ENCODE measurements at regions of chr1 and their contacts with region 1.

Region 1: DNA sequence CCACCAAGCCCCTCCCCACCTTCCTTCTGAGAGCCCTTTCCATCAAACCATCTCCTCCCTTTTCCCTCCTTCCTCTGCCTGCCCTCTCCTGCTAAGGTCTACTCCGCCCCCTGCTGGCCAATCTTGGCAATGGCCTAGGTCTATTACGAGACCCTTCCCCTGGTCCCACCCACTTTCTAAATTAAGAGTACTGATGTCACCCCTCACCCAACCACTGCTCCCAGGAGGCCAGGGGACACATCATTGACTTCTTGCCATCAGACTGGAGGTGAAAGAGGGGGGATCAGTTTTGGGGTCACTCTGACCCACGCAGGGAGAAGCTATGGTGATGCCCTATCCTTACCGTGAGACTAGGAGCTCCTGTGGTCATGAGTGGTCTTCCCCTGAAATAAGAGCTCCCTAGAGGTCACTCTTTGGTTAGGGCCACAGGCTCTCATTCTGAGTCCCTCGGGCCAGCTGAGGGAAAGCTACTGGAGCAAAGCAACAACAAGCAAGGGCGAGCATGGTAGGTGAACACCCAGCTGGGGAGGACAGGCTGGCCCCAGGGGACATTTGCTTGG is 34.6 kb upstream of the S100A7 start:
- DNase-seq: peak; percentile 48 to 82
- ATAC-seq: peak; percentile 75

Region 2: DNA sequence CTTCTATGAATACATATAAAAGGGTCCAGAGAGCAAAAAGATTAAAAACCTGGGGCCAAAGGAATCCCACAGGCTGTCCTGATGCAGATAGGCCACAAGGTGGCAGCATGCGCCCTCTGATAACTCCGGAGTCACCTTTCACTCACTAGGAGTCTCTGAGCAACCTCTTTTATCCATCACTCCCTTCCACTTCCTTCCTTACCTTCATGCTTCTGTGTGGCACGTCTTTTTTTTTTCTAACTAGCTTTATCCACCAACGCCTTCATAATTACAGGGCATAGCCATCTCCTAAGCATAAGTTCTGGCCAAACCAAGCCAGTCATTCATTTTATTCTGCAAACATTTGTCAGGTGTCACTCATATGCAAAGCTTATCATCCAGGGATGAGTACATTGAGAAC is 142.5 kb before region 1 on chr1:
- intact Hi-C with region 1: loop called (anchors 5 to 10 kb)
- DNase-seq: peak in 1 of 2 donors; percentile 67
- ATAC-seq: peak; percentile 81

Measured in left colon (tissue), 2 donors.